ENCODE measurements at regions of chr12 and their contacts with region 1.

Region 1: DNA sequence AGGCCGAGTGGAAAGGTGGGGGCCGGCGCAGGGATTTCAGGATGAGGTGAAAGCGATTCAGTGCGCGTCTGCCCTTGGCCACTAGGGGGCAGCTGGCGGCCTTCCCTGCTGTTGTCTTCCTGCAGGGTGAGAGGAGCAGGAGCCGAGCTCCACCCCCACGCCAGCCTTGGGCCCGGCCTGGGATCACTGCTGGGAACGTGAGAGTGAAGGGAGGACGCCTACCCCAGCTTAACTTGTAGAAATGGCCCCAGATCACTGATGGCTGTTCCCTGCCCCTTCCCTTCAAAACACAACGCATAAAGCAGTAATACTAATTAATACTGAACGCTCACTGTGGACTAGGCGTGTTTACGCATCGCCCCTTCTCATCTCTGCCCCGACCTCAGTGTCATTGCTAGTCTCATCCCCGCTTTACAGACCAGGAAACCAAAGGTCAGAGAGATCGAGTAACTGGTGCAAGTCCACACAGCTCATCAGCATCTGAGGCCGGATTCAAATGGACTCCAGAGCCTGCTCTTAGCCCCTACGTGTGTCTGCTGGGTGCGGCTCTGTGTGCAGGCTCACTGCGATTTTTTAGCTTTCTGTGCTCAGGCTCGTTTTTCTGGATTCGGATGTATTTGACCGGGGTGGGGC is 24.3 kb downstream of the MVK start:
- DNase-seq: peak; percentile 89 to 95 (median 93)
- H3K4me3 ChIP-seq: no peak overlapping the region
- H3K27ac ChIP-seq: peak overlapping the region in 1 of 5 donors; percentile 12
- H3K4me1 ChIP-seq: peaks cover 0 to 5% of the 10 kb centered on the region in 2 donors
- H3K27me3 ChIP-seq: no peaks in the 10 kb centered on the region
- CTCF ChIP-seq: peak; percentile 96 to 98 (median 96)
- POLR2A ChIP-seq: no peak

Region 2: GRCh38 chr12:109518820-109519665 is 78.9 kb before region 1 on chr12:
- intact Hi-C with region 1: loop called in 1 of 2 experiments (anchors 5 kb)
- DNase-seq: peak; percentile 60 to 92 (median 75)
- H3K4me3 ChIP-seq: no peak overlapping the region
- H3K27ac ChIP-seq: peak overlapping the region in 2 of 5 donors; percentile 29 to 46
- H3K4me1 ChIP-seq: peaks cover 0 to 14% of the 10 kb centered on the region in 2 donors
- H3K27me3 ChIP-seq: no peaks in the 10 kb centered on the region
- CTCF ChIP-seq: peak; percentile 76 to 88 (median 80)
- POLR2A ChIP-seq: no peak

Region 3: GRCh38 chr12:109719236-109720022 is 121.5 kb after region 1 on chr12:
- intact Hi-C with region 1: loop called in 1 of 2 experiments (anchors 5 kb)
- DNase-seq: peak in 6 of 7 donors; percentile 54 to 81 (median 68)
- H3K4me3 ChIP-seq: no peak overlapping the region
- H3K27ac ChIP-seq: peak overlapping the region in 4 of 5 donors; percentile 64 to 89 (median 85)
- H3K4me1 ChIP-seq: peaks cover 70 to 91% of the 10 kb centered on the region in 2 donors
- H3K27me3 ChIP-seq: no peaks in the 10 kb centered on the region
- CTCF ChIP-seq: peak; percentile 24 to 57 (median 42)
- POLR2A ChIP-seq: peak in 1 of 2 donors; percentile 48

Region 4: DNA sequence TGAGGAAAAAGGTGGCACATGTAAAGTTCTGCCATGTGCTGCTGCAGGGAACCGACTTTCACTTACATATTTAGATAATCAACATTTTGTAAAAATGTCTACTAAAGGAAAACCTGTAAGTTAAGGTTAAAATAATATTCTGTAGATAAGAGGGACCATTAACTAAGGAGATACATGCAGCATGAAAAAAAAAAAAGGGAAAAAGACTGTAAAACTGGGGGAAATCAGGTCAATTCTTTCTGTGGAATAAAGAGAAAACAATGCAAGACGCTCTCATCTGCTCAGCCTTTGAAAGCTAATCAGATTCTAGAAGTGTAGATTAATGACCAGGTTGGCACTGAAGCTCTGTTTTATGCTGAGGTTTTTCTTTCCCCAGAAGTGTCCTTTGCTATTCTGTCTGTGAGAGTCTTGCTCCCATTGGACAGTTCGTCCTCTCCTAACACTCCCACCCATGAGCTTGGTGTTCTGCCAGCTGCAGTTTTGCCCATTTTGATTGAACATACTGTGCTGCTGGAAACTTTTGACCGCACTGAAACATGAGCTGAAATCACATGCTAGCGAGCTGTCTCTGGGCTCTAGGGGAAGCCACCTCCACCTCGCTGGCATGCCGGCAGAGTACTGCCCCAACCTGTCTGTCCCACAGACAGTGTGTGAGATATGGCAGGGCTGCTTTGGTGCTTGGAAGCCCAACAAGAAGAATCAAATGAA is 945.5 kb after region 1 on chr12:
- intact Hi-C with region 1: no loop called
- DNase-seq: peak; percentile 87 to 98 (median 95)
- H3K4me3 ChIP-seq: peak overlapping the region in 1 of 4 donors; percentile 9
- H3K27ac ChIP-seq: peak overlapping the region; percentile 22 to 83 (median 72)
- H3K4me1 ChIP-seq: peaks cover 18 to 44% of the 10 kb centered on the region in 2 donors
- H3K27me3 ChIP-seq: no peaks in the 10 kb centered on the region
- CTCF ChIP-seq: no peak
- POLR2A ChIP-seq: peak in 1 of 2 donors; percentile 21

Measured in adrenal gland (tissue), 19 donors.